Activated B cell treated with CpG ODN at 0.5 μM for 24 hours (primary cell): ENCODE measurements at regions of chr16 and their contacts with region 1.

Region 1: DNA sequence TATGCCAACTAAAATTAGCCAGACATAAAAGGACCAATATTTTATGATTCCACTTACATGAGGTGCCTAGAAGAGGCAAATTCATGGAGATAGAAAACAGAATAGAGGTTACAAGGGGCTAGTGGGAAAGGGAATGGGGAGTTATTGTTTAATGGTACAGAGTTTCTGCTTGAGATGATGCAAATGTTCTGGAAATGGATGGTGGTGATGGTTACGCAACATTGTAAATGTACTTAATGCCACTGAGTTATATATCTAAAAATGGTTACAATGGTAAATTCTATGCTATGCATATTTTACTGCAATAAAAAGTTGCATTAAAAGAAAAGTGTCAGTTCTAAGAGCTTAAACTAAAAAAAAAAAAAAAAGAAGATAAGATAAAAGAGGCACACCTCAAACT is 17.9 kb downstream of the MT1X start:
- DNase-seq: no peak
- ATAC-seq: no peak
- H3K4me3 Mint-ChIP-seq: no peak overlapping the region
- H3K27ac Mint-ChIP-seq: no peak overlapping the region
- H3K4me1 Mint-ChIP-seq: peaks cover 8% of the 10 kb centered on the region
- H3K27me3 Mint-ChIP-seq: no peaks in the 10 kb centered on the region
- CTCF ChIP-seq: no peak

Region 2: GRCh38 chr16:55842369-55843104 is 857.7 kb before region 1 on chr16:
- CTCF ChIA-PET with region 1: no interaction called
- POLR2A ChIA-PET with region 1: no interaction called
- intact Hi-C with region 1: loop called (anchors 5 kb)
- DNase-seq: no peak
- ATAC-seq: no peak
- H3K4me3 Mint-ChIP-seq: no peak overlapping the region
- H3K27ac Mint-ChIP-seq: no peak overlapping the region
- H3K4me1 Mint-ChIP-seq: no peaks in the 10 kb centered on the region
- H3K27me3 Mint-ChIP-seq: peaks cover 18% of the 10 kb centered on the region
- CTCF ChIP-seq: no peak

Region 3: DNA sequence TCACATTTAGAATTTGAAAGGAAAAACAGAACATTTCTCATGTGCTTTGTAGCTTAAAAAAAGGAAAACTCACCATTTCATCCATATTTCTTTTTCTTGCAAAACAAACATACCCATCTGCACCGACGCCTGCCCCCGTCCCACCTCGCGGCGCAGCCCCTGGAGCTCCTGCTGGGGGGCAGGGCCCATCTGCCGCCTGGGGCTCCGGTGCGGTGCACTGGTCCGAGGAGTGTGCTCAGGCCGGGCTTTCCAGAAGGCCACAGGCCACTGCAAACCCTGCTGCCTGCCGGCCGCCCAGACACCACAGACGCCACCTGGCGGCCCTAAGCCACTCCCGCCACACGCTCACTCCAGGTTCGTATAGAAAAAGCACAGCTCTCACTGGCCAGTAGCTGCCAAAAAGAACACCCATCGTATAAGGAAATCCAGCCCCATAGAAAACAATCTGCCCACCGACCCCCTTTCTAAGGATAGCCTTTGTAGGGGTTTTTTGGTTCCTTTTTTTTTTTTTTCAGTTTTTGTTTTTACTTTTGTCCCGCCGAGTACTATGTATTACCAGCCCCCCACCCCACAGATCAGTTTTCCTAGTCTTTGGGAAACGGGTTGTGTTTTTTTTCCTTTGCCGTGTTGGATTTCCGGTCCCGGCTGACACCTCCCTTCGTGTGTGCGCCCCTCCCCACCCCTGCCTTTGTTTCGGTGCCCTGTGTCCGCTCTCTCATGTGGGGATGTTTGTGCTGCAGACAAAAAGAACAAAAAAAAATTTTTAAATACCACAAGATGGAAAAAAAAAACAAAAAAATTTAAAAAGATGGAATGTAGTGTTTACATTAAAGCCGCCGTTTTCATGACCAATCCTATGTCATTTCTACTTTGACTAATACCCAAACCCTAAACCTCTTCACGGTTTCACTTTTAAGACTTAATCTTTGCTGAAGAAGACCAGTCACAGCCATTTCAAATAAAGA is 343.6 kb before region 1 on chr16:
- CTCF ChIA-PET with region 1: interaction called, 10 read pairs
- POLR2A ChIA-PET with region 1: no interaction called
- intact Hi-C with region 1: loop called (anchors 10 kb)
- DNase-seq: peak; percentile 57
- ATAC-seq: peak; percentile 92
- H3K4me3 Mint-ChIP-seq: peak overlapping the region; percentile 80
- H3K27ac Mint-ChIP-seq: peak overlapping the region; percentile 42
- H3K4me1 Mint-ChIP-seq: peaks cover 18% of the 10 kb centered on the region
- H3K27me3 Mint-ChIP-seq: no peaks in the 10 kb centered on the region
- CTCF ChIP-seq: peak; percentile 61

Region 4: GRCh38 chr16:56513972-56514371 is 186.2 kb before region 1 on chr16:
- CTCF ChIA-PET with region 1: interaction called, 27 read pairs
- POLR2A ChIA-PET with region 1: interaction called, 7 read pairs
- intact Hi-C with region 1: loop called (anchors 1 kb)
- DNase-seq: no peak
- ATAC-seq: peak; percentile 84
- H3K4me3 Mint-ChIP-seq: no peak overlapping the region
- H3K27ac Mint-ChIP-seq: peak overlapping the region; percentile 32
- H3K4me1 Mint-ChIP-seq: peaks cover 20% of the 10 kb centered on the region
- H3K27me3 Mint-ChIP-seq: no peaks in the 10 kb centered on the region
- CTCF ChIP-seq: no peak

Region 5: DNA sequence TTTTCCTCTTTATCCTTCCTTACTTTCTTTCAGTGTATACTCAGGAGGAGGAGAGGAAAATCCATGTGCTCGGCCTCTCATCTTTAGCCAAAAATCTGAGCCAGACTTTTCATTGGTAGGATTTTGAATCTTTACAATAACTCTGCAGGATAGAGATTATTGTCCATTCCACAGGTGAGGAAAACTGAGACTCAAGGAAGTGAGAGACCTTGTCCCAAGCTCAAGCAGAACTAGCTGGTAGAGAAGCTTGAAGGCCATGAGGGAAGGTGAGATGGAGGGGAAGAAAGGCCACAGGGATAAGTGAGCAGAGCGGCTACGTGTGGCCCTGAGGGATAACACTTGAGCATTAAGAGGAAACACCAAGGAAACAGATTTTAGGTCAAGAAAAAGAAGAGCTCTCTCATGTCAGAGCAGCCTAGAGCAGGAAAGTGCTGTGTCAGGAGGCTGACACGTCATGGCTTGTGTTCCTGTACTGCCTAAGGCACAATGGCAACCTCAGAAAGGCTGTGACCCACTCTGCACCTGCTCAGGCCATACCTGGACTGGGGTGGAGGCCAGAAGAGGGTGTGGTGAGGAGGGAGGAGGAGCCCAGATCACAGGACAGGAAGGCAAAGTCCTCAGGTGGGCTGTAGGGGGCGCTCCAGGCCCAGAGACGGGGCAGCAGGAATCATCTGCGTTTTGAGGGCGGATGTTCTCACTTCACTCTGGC is 123.5 kb before region 1 on chr16:
- CTCF ChIA-PET with region 1: interaction called, 34 read pairs
- POLR2A ChIA-PET with region 1: interaction called, 7 read pairs
- intact Hi-C with region 1: loop called (anchors 1 kb)
- DNase-seq: peak; percentile 67
- ATAC-seq: peak; percentile 96
- H3K4me3 Mint-ChIP-seq: no peak overlapping the region
- H3K27ac Mint-ChIP-seq: no peak overlapping the region
- H3K4me1 Mint-ChIP-seq: no peaks in the 10 kb centered on the region
- H3K27me3 Mint-ChIP-seq: peaks cover 3% of the 10 kb centered on the region
- CTCF ChIP-seq: no peak

Region 6: GRCh38 chr16:56673921-56674320 is 26.3 kb before region 1 on chr16:
- CTCF ChIA-PET with region 1: interaction called, 11 read pairs
- POLR2A ChIA-PET with region 1: interaction called, 3 read pairs
- intact Hi-C with region 1: loop called (anchors 1 kb)
- DNase-seq: no peak
- ATAC-seq: peak; percentile 61
- H3K4me3 Mint-ChIP-seq: no peak overlapping the region
- H3K27ac Mint-ChIP-seq: no peak overlapping the region
- H3K4me1 Mint-ChIP-seq: peaks cover 11% of the 10 kb centered on the region
- H3K27me3 Mint-ChIP-seq: peaks cover 58% of the 10 kb centered on the region
- CTCF ChIP-seq: no peak